ENCODE measurements at regions of chr14 and their contacts with region 1.

Region 1: GRCh38 chr14:75906676-75907280 is 75.0 kb downstream of the TGFB3 start:
- DNase-seq: peak; percentile 67
- H3K4me3 Mint-ChIP-seq: no peak overlapping the region
- H3K27ac Mint-ChIP-seq: no peak overlapping the region
- H3K4me1 Mint-ChIP-seq: no peaks in the 10 kb centered on the region
- H3K27me3 Mint-ChIP-seq: no peaks in the 10 kb centered on the region

Region 2: DNA sequence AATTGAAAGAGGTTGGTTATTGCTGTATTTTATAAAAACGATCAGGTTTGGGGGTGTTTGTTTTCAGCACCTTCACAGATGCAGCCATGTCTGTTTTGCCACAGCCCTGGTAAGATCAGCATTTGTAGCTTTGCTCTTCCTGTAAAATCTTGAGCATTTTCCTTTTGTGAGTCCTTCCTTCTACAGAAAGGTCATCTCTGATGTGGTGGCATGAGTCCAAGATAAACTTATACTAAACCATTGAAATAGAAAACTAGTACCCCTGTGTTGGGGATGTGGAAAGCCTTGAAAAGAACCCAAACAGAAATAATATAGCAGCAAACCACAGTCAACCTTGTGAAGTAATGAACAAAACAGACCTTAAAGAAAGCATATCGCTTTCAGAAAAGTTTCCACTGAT is 10.4 kb before region 1 on chr14:
- CTCF ChIA-PET with region 1: interaction called, 21 read pairs
- POLR2A ChIA-PET with region 1: no interaction called
- DNase-seq: no peak
- H3K4me3 Mint-ChIP-seq: no peak overlapping the region
- H3K27ac Mint-ChIP-seq: no peak overlapping the region
- H3K4me1 Mint-ChIP-seq: no peaks in the 10 kb centered on the region
- H3K27me3 Mint-ChIP-seq: no peaks in the 10 kb centered on the region

Region 3: GRCh38 chr14:75917322-75917945 is 10.7 kb after region 1 on chr14:
- CTCF ChIA-PET with region 1: interaction called, 10 read pairs
- POLR2A ChIA-PET with region 1: no interaction called
- DNase-seq: no peak
- H3K4me3 Mint-ChIP-seq: no peak overlapping the region
- H3K27ac Mint-ChIP-seq: no peak overlapping the region
- H3K4me1 Mint-ChIP-seq: no peaks in the 10 kb centered on the region
- H3K27me3 Mint-ChIP-seq: no peaks in the 10 kb centered on the region

Region 4: GRCh38 chr14:75946785-75947184 is 40.0 kb after region 1 on chr14:
- CTCF ChIA-PET with region 1: no interaction called
- POLR2A ChIA-PET with region 1: no interaction called
- DNase-seq: no peak
- H3K4me3 Mint-ChIP-seq: no peak overlapping the region
- H3K27ac Mint-ChIP-seq: no peak overlapping the region
- H3K4me1 Mint-ChIP-seq: no peaks in the 10 kb centered on the region
- H3K27me3 Mint-ChIP-seq: no peaks in the 10 kb centered on the region

Region 5: DNA sequence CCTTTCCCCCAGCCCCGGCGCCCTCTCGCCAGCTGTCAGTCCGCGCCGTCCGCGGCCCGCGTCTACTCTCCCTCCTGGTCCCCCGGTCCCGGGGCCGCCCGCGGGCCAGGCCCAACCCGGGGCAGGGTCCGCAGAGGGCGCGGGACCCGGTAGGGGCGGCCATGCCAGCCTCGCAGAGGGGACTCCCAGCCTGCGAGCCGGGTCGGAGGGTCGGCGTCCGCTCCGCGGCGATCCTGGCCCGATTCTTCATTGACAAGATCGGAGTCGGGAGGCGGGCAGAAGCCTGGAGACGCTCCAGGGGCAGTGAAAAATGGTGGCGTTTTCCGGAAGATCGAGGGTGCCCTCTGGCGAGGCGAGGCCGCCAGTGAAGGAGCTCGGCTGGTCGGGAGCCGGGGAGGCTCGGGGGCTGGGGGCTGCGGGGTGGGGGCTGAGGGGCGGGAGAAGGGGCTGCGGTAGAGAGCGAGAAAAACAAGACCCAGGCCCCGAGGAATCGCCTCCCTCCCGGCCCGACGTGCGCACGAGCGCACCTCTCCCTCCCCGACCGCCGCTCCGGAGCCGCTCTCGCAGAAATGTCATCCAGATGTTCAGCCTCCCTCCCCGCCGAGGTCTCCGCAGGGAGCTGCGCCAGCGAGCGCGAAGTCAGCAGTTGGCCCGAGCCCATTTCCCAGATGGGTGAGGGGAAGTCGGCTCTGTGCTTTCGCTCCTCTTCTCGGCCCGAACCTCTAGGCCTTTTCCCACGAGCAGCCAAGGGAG is 75.7 kb after region 1 on chr14:
- CTCF ChIA-PET with region 1: interaction called, 74 read pairs
- POLR2A ChIA-PET with region 1: no interaction called
- DNase-seq: peak; percentile 79
- H3K4me3 Mint-ChIP-seq: peak overlapping the region; percentile 74
- H3K27ac Mint-ChIP-seq: peak overlapping the region; percentile 47
- H3K4me1 Mint-ChIP-seq: peaks cover 49% of the 10 kb centered on the region
- H3K27me3 Mint-ChIP-seq: peaks cover 16% of the 10 kb centered on the region

Region 6: DNA sequence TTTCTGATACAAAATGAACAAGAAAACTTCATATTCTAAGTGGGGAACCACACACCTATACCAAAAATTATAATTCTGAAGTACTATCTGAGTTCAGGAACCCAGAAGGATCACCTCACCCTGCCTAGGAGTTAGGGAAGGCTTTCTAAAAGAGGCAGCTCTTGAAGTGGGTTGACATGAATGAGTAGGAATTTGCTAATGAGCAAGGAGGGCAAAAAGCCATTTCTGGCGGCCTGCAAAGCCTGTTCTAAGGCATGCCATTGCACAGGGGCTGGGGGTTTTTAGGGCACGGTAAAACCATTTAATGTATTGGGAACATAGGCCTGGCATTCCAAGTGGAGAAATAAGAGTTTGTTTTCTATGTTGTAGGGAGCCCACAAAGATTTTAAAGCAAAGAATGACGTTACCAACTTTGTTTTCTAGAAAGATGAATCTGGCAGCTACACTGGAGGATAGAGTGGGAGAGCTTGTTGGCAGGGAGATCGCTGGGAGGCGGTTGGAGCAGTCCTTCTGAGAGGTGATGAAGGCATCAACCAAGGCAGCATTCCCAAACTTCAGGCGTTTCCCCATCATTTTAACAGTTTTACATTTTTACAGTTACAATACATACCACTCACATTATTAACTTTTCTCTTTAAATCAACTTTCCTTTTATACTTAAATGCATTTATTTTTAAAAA is 92.9 kb after region 1 on chr14:
- CTCF ChIA-PET with region 1: no interaction called
- POLR2A ChIA-PET with region 1: no interaction called
- DNase-seq: no peak
- H3K4me3 Mint-ChIP-seq: no peak overlapping the region
- H3K27ac Mint-ChIP-seq: no peak overlapping the region
- H3K4me1 Mint-ChIP-seq: no peaks in the 10 kb centered on the region
- H3K27me3 Mint-ChIP-seq: no peaks in the 10 kb centered on the region

Measured in activated CD4-positive, alpha-beta memory T cell treated with anti-CD3 and anti-CD28 coated beads, Interleukin-2, amount 10 ng/mL, durations not matched to agents 7 days and 5 days (primary cell).